ENCODE measurements at regions of chr7 and their contacts with region 1.

Region 1: GRCh38 chr7:44200647-44201461 is at the start of gene YKT6:
- DNase-seq: peak; percentile 97
- total RNA-seq, gene YKT6: 56.7 to 71.8 TPM

Region 2: GRCh38 chr7:44072364-44073231 is 128.3 kb before region 1 on chr7:
- intact Hi-C with region 1: loop called in 1 of 2 experiments (anchors 5 kb)
- DNase-seq: peak; percentile 96

Region 3: GRCh38 chr7:44348300-44348699 is 147.4 kb after region 1 on chr7:
- intact Hi-C with region 1: loop called in 1 of 2 experiments (anchors 1 kb)
- DNase-seq: no peak

Measured in posterior vena cava (tissue), 2 donors.